Common myeloid progenitor, CD34-positive (primary cell): ENCODE measurements at regions of chr10 and their contacts with region 1.

Region 1: DNA sequence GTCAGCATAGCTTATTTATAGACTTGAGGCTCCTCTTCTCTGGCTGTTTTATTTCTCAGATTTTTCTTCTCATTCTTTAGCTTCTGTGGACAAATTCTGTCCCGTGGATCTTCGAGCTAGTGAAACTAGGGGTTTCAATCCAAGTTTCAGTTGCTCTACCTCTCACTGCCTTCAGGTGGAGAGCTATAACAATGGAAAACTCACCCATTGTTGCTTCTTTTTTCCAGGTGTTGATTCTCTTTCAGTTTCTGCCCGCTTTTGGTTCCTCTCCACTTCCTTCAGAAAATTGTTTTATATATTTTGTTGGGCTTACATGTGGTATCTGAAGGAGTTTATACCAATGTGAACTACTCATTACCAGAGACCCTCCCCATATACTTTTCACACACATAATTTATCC is 266.1 kb downstream of the TCF7L2 start:
- DNase-seq: peak; percentile 54 to 75 (median 72)
- H3K4me3 ChIP-seq: peak overlapping the region in 1 of 7 experiments; percentile 10
- H3K27ac ChIP-seq: no peak overlapping the region
- H3K4me1 ChIP-seq: peaks cover 0 to 11% (median under 1%) of the 10 kb centered on the region in 4 experiments
- H3K27me3 ChIP-seq: no peaks in the 10 kb centered on the region

Region 2: DNA sequence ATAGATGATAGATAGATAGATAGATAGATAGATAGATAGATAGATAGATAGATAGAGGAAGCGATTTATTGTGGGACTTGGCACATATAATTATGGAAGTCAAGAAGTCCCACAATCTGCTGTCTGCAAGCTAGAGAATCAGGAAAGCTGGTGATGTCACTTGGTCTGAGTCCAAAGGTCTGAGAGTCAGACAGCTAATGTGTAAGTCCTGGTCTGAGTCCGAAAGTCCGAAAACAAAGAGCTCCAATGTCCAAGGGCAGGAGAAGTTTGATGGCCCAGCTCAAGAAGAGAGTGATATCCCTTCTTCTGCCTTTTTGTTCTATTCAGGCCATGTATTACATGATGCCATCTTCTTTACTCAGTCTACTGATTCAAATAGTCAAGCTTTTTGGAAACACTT is 319.8 kb before region 1 on chr10:
- CTCF ChIA-PET with region 1: no interaction called
- POLR2A ChIA-PET with region 1: no interaction called
- DNase-seq: no peak
- H3K4me3 ChIP-seq: no peak overlapping the region
- H3K27ac ChIP-seq: no peak overlapping the region
- H3K4me1 ChIP-seq: peaks cover 0 to 4% (median 0%) of the 10 kb centered on the region in 4 experiments
- H3K27me3 ChIP-seq: no peaks in the 10 kb centered on the region

Region 3: DNA sequence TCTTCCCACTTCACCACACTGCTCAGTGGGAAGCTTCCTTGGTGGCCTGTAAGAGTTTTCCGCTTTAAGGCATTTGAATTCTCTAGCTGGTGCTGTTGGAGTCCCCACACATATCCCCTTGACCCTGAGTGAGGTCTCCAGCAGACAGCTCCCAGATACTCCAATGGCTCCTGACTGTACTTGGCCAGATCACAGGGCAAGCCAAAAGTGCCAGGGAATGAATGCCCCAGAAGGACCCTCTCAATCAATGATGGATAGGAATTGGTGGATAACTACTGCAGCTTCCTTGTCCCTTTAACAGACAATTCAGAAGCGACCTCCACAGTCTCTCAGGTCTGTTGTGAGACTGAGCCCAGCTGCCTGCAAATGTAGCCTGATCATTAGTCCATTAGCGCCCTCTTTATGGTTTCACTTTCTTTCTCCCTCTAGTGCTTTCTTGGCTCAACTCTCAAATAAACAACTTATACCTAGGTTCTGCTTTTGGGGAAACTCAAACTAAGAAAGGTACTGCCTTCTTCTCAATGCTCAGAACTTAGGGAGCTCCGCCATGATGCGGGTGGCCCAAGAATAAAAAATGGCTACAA is 16.9 kb after region 1 on chr10:
- CTCF ChIA-PET with region 1: interaction called, 10 read pairs
- POLR2A ChIA-PET with region 1: interaction called, 3 read pairs
- DNase-seq: peak; percentile 52 to 92 (median 89)
- H3K4me3 ChIP-seq: peak overlapping the region in 3 of 7 experiments; percentile 33 to 50 (median 46)
- H3K27ac ChIP-seq: no peak overlapping the region
- H3K4me1 ChIP-seq: peaks cover 0 to 10% (median 2%) of the 10 kb centered on the region in 4 experiments
- H3K27me3 ChIP-seq: no peaks in the 10 kb centered on the region

Region 4: GRCh38 chr10:113454341-113455061 is 238.4 kb after region 1 on chr10:
- CTCF ChIA-PET with region 1: interaction called, 10 read pairs
- POLR2A ChIA-PET with region 1: no interaction called
- DNase-seq: peak; percentile 48 to 68 (median 68)
- H3K4me3 ChIP-seq: no peak overlapping the region
- H3K27ac ChIP-seq: no peak overlapping the region
- H3K4me1 ChIP-seq: no peaks in the 10 kb centered on the region
- H3K27me3 ChIP-seq: peaks cover 0 to under 1% (median 0%) of the 10 kb centered on the region in 5 experiments